ENCODE measurements at regions of chr2 and their contacts with region 1.

Region 1: GRCh38 chr2:169397697-169398096 is 35.4 kb upstream of the LRP2 start:
- DNase-seq: peak; percentile 3
- ATAC-seq: no peak
- H3K4me3 ChIP-seq: no peak overlapping the region
- H3K27ac ChIP-seq: no peak overlapping the region
- H3K4me1 ChIP-seq: no peaks in the 10 kb centered on the region; a peak in 1 of 4 replicates
- H3K27me3 ChIP-seq: no peaks in the 10 kb centered on the region
- CTCF ChIP-seq: peak; percentile 18 to 48 (median 47); a peak in 4 of 6 replicates
- POLR2A ChIP-seq: no peak
- RAD21 ChIP-seq: peak; percentile 72

Region 2: GRCh38 chr2:168961450-168962229 is 436.1 kb before region 1 on chr2:
- CTCF ChIA-PET with region 1: interaction called, 5 read pairs
- POLR2A ChIA-PET with region 1: no interaction called
- RAD21 ChIA-PET with region 1: no interaction called
- intact Hi-C with region 1: loop called (anchors 5 kb)
- DNase-seq: peak; percentile 79
- ATAC-seq: peak; percentile 98
- H3K4me3 ChIP-seq: no peak overlapping the region
- H3K27ac ChIP-seq: no peak overlapping the region
- H3K4me1 ChIP-seq: 0 out of 4 replicates have a peak, but pooled peaks cover 0 to 2% of the 10 kb centered on the region in 2 experiments
- H3K27me3 ChIP-seq: no peaks in the 10 kb centered on the region
- CTCF ChIP-seq: peak; percentile 69 to 89 (median 81)
- POLR2A ChIP-seq: no peak
- RAD21 ChIP-seq: peak; percentile 86

Region 3: GRCh38 chr2:169131587-169132512 is 265.8 kb before region 1 on chr2:
- CTCF ChIA-PET with region 1: interaction called, 15 read pairs
- POLR2A ChIA-PET with region 1: no interaction called
- RAD21 ChIA-PET with region 1: no interaction called
- intact Hi-C with region 1: no loop called
- DNase-seq: peak; percentile 77
- ATAC-seq: peak; percentile 98
- H3K4me3 ChIP-seq: no peak overlapping the region
- H3K27ac ChIP-seq: no peak overlapping the region
- H3K4me1 ChIP-seq: 0 out of 4 replicates have a peak, but pooled peaks cover 0 to 2% of the 10 kb centered on the region in 2 experiments
- H3K27me3 ChIP-seq: no peaks in the 10 kb centered on the region
- CTCF ChIP-seq: peak; percentile 69 to 98 (median 79)
- POLR2A ChIP-seq: no peak
- RAD21 ChIP-seq: peak; percentile 68

Region 4: DNA sequence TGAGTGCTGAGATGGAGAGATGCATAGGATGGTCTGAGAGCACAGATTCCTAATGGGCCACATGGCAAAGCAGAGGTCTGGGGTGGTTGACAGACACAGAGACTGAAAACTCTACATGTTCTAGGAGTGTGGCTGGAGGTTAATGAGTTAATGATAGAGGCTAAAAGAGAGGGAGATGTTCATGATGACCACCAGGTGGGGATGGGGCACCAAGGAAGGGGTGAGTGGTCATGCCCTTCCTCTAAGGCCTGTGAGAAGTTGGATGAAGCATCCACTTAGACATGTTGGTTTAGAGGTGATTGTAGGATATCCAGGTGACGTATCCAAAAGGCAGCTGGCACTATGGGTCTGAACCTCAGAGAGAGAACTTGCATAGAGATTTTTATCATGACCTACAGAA is 137.5 kb before region 1 on chr2:
- CTCF ChIA-PET with region 1: no interaction called
- POLR2A ChIA-PET with region 1: no interaction called
- RAD21 ChIA-PET with region 1: no interaction called
- intact Hi-C with region 1: no loop called
- DNase-seq: no peak
- ATAC-seq: peak; percentile 58
- H3K4me3 ChIP-seq: no peak overlapping the region
- H3K27ac ChIP-seq: no peak overlapping the region
- H3K4me1 ChIP-seq: peaks cover 4 to 5% of the 10 kb centered on the region in 2 experiments; a peak in 2 of 4 replicates
- H3K27me3 ChIP-seq: no peaks in the 10 kb centered on the region
- CTCF ChIP-seq: peak in 2 of 3 experiments; percentile 18; a peak in 1 of 6 replicates
- POLR2A ChIP-seq: no peak
- RAD21 ChIP-seq: peak; percentile 40